ENCODE measurements at regions of chrX and their contacts with region 1.

Region 1: DNA sequence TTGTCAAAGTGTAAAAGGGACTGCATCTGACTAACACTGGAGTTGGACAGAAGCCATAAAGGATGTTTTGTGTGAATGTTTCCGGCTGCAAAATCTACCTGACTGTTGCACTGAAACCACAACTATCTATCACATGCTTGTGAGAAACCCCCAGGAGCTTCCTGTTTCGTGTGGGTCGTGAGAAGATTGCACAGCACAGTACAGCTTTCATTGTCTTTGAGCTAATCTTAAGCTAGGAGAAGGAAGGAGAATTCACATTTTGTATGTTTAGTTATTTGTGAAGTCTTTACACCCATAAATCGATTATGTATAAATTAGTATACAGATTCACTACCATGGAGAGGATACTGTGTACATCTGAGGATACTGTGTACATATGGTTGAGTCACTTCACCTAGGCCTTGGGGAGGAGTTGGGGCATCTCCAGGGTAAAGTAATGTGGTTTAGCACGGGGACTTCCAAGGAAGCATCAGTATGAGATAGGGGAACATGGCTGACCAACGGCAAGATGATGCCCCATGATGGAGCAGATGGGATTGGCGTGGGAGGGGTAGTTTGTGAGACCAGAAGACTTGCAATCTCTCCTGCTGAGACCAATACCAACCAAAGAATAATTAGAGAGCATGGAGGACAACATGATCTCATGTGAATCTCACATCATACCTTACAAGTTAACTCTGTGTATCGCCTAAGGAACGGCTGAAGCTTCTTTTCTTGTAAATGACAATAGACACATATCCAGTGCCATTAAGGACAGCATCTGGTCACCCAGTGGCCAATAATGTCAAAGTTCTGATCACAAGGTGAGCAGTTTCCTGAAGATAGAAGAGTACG is 43.1 kb upstream of the FAM9C start:
- DNase-seq: peak; percentile 99
- ATAC-seq: peak; percentile 54
- H3K4me3 ChIP-seq: no peak overlapping the region; the same call in 1 of the 2 replicates
- H3K27ac ChIP-seq: peak overlapping the region; percentile 100
- H3K4me1 ChIP-seq: peaks cover 89% of the 10 kb centered on the region
- H3K27me3 ChIP-seq: no peaks in the 10 kb centered on the region
- CTCF ChIP-seq: no peak
- EP300 ChIP-seq: peak; percentile 71 to 90
- POLR2A ChIP-seq: 0 out of 2 replicates have a peak, but pooled peaks have one; percentile 45
- RAD21 ChIP-seq: 0 out of 2 replicates have a peak, but pooled peaks have one; percentile 15

Region 2: GRCh38 chrX:12843668-12844279 is 243.8 kb before region 1 on chrX:
- CTCF ChIA-PET with region 1: no interaction called
- POLR2A ChIA-PET with region 1: interaction called, 3 read pairs
- RAD21 ChIA-PET with region 1: interaction called, 4 read pairs
- SMC1A ChIA-PET with region 1: no interaction called
- in situ Hi-C with region 1: no loop called
- intact Hi-C with region 1: loop called (anchors 5 kb)
- DNase-seq: peak; percentile 85
- ATAC-seq: peak; percentile 92
- H3K4me3 ChIP-seq: peak overlapping the region; percentile 42; the same call in 1 of the 2 replicates
- H3K27ac ChIP-seq: peak overlapping the region; percentile 100
- H3K4me1 ChIP-seq: peaks cover 29% of the 10 kb centered on the region
- H3K27me3 ChIP-seq: no peaks in the 10 kb centered on the region
- CTCF ChIP-seq: no peak
- EP300 ChIP-seq: peak in 1 of 2 experiments; percentile 57; a peak in 1 of 4 replicates
- POLR2A ChIP-seq: no peak
- RAD21 ChIP-seq: no peak

Region 3: DNA sequence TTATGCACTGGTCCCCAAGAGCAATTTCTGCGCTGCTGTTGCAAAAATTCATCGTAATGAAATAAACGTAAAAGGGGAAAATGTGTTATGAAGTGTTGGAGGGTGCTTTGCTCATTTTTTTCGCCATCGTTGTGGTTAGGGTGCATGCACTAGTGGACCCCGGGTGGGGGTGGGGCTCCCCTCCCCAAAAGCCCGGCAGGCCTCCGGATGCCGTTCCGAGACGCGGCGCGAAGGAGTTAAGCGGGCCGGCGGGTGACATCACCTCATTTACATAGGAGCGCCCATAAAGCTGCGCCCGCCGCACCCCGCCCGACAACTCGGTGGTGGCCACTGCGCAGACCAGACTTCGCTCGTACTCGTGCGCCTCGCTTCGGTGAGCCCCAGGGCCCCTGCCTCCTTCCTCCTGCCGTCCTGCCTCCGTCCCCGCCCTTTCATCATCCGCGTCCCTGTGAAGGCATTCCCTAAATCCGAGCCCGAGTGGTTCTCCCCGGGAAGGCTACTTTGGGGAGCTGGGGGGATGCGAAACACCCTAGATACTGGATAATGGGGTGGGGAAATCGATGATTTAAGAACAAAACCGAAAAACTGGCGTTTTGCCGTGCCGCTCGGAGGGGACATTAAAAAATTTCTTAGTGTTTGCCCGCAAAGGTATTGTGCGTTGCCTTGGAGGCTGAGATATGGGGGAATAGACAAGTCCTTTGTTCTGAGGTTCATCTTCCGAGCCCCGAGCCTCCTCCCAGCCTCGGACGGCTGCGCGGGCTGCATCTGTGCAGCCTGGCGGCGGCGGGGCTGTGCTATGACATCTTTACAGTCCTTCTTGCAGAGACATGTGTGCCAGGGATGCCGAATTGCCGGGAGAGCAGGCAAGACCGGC is 112.5 kb before region 1 on chrX and contains the start of gene TMSB4X:
- CTCF ChIA-PET with region 1: interaction called, 13 read pairs
- POLR2A ChIA-PET with region 1: interaction called, 21 read pairs
- RAD21 ChIA-PET with region 1: interaction called, 562 read pairs
- SMC1A ChIA-PET with region 1: interaction called, 393 read pairs
- in situ Hi-C with region 1: no loop called
- intact Hi-C with region 1: loop called (anchors 1 kb)
- DNase-seq: no peak
- ATAC-seq: peak; percentile 35
- H3K4me3 ChIP-seq: peak within 1 kb of the TSS; percentile 81
- H3K27ac ChIP-seq: peak within 1 kb of the TSS; percentile 90
- H3K4me1 ChIP-seq: peaks cover 6% of the 10 kb centered on the region; the same call in 1 of the 2 replicates
- H3K27me3 ChIP-seq: no peaks in the 10 kb centered on the region
- CTCF ChIP-seq: no peak
- EP300 ChIP-seq: no peak
- POLR2A ChIP-seq: peak; percentile 97
- RAD21 ChIP-seq: no peak
- polyA plus RNA-seq, gene TMSB4X: 32,576 to 35,408 TPM

Region 4: DNA sequence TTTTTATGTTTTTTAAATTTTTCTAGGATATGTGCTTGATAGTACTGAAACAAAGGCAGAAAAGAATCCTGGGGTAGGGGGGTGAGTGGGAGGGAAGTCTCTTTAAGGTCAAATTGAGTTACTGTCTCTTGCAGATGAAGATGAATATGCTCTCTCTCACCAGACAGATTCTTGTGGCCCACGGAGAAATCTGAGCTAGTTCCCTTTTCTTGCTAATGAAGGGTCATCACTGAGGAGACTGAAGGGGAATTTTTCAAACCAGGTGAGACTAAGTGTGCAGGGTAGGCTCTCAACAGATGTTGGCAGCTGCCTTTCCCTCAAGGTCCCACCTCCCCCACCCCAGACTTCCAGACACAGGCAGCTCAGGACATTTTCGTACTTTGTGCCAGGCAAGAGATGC is 64.6 kb before region 1 on chrX:
- CTCF ChIA-PET with region 1: interaction called, 5 read pairs
- POLR2A ChIA-PET with region 1: interaction called, 11 read pairs
- RAD21 ChIA-PET with region 1: interaction called, 18 read pairs
- SMC1A ChIA-PET with region 1: interaction called, 84 read pairs
- in situ Hi-C with region 1: no loop called
- intact Hi-C with region 1: loop called (anchors 1 kb)
- DNase-seq: no peak
- ATAC-seq: peak; percentile 91
- H3K4me3 ChIP-seq: no peak overlapping the region
- H3K27ac ChIP-seq: peak overlapping the region; percentile 47
- H3K4me1 ChIP-seq: peaks cover 43% of the 10 kb centered on the region
- H3K27me3 ChIP-seq: no peaks in the 10 kb centered on the region
- CTCF ChIP-seq: no peak
- EP300 ChIP-seq: peak in 1 of 2 experiments; percentile 75; a peak in 2 of 4 replicates
- POLR2A ChIP-seq: no peak
- RAD21 ChIP-seq: no peak

Region 5: DNA sequence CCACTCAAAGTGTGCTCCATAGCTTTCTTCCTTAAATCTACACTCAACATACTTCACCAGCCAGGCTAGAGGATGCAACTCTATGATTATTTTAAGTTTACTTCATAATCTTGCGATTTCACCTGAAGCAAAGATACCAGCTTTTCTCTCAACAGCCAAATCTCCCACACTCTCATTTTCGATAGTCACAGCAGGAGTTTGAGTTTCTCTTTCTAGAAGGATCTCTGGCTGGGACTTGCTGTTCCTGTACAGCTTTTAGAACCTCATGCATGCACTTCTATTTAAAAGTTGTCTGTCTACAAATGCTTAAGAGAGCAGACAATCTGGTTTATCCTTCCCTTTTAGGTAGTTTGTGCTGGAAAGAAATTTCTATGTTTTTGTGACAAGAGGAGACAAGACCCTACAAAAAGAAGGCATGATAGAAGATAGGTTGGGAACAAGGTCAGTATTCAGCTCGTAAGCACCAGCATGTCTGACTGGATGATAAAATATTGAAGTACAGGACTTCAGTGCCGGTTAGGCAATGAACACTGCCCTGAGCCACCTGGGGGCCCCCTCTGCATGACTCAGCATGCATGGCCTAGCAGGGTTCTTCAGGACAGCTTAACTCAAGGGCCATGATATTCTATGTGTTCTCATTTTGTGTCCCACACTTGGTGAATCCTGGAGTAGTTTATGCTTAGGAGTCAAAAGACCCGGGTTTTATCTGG is 166.7 kb after region 1 on chrX:
- CTCF ChIA-PET with region 1: interaction called, 104 read pairs
- POLR2A ChIA-PET with region 1: interaction called, 49 read pairs
- RAD21 ChIA-PET with region 1: interaction called, 242 read pairs
- SMC1A ChIA-PET with region 1: interaction called, 153 read pairs
- in situ Hi-C with region 1: loop called (anchors 5 kb)
- intact Hi-C with region 1: loop called (anchors 1 kb)
- DNase-seq: peak; percentile 56
- ATAC-seq: peak; percentile 59
- H3K4me3 ChIP-seq: no peak overlapping the region; the same call in 1 of the 2 replicates
- H3K27ac ChIP-seq: peak overlapping the region; percentile 92
- H3K4me1 ChIP-seq: peaks cover 58% of the 10 kb centered on the region
- H3K27me3 ChIP-seq: no peaks in the 10 kb centered on the region
- CTCF ChIP-seq: peak; percentile 33 to 52 (median 41); a peak in 4 of 6 replicates
- EP300 ChIP-seq: no peak
- POLR2A ChIP-seq: no peak
- RAD21 ChIP-seq: peak; percentile 75

Region 6: GRCh38 chrX:13473442-13474163 is 386.1 kb after region 1 on chrX:
- CTCF ChIA-PET with region 1: interaction called, 6 read pairs
- POLR2A ChIA-PET with region 1: no interaction called
- RAD21 ChIA-PET with region 1: interaction called, 9 read pairs
- SMC1A ChIA-PET with region 1: interaction called, 17 read pairs
- in situ Hi-C with region 1: loop called (anchors 5 kb)
- intact Hi-C with region 1: no loop called
- DNase-seq: peak; percentile 52
- ATAC-seq: peak; percentile 92
- H3K4me3 ChIP-seq: peak overlapping the region; percentile 52; the same call in 1 of the 2 replicates
- H3K27ac ChIP-seq: peak overlapping the region; percentile 88
- H3K4me1 ChIP-seq: no peaks in the 10 kb centered on the region
- H3K27me3 ChIP-seq: no peaks in the 10 kb centered on the region
- CTCF ChIP-seq: no peak
- EP300 ChIP-seq: peak; percentile 51 to 81; a peak in 3 of 4 replicates
- POLR2A ChIP-seq: no peak
- RAD21 ChIP-seq: no peak

Region 7: GRCh38 chrX:13669246-13669737 is 581.8 kb after region 1 on chrX:
- CTCF ChIA-PET with region 1: no interaction called
- POLR2A ChIA-PET with region 1: no interaction called
- RAD21 ChIA-PET with region 1: interaction called, 5 read pairs
- SMC1A ChIA-PET with region 1: interaction called, 4 read pairs
- in situ Hi-C with region 1: no loop called
- intact Hi-C with region 1: loop called (anchors 5 kb)
- DNase-seq: peak; percentile 89
- ATAC-seq: peak; percentile 77
- H3K4me3 ChIP-seq: peak overlapping the region; percentile 44; the same call in 1 of the 2 replicates
- H3K27ac ChIP-seq: peak overlapping the region; percentile 92
- H3K4me1 ChIP-seq: peaks cover 37% of the 10 kb centered on the region
- H3K27me3 ChIP-seq: no peaks in the 10 kb centered on the region
- CTCF ChIP-seq: no peak
- EP300 ChIP-seq: peak; percentile 91 to 92
- POLR2A ChIP-seq: no peak
- RAD21 ChIP-seq: 0 out of 2 replicates have a peak, but pooled peaks have one; percentile 15

Region 8: DNA sequence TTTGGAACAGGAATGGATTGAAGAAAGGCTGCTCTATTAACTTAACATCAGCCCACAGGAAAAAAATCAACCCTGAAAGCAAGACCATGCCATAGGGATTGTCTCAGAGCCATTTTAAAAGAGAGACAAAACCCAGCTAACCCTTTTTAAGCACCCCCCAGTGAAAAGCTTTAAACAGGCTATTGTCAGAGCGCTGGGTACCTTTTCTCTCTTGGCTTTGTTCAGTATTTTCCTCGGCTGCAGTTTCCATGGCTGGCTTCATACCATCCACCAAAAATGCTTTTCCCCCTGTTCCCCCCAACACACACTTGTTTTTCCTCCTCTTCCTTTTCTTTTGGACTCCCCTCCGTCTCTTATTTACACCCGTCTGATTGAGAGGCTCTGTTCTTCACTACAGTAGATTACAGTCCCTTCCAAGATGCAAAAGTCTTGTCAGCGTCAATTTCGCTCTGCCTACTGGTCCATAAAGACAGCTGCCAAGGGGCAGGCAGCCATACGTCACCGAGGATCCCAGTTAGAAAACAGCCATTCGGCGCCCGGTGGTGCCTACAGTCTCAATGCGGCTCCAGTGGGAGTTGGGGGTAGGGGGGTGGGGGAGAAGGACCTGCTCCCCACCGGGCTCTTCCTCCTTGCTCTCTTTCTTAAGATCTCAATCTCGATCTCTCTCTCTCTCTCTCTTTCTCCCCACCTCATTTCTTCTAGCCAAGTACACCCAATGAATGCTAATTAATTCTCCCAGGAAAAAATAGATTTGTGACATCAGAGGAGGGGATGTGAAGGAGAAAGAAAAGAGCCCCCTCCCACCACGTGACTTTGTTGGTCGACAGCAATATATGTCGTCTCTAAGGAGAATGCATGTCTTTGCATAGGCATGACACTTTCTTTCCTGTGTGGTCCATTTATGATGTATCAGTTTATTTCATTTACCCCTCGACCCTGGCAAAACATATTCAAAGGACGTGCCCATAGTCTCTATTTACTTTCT is 729.4 kb after region 1 on chrX and contains the start of gene GPM6B:
- CTCF ChIA-PET with region 1: no interaction called
- POLR2A ChIA-PET with region 1: no interaction called
- RAD21 ChIA-PET with region 1: no interaction called
- SMC1A ChIA-PET with region 1: no interaction called
- in situ Hi-C with region 1: no loop called
- intact Hi-C with region 1: no loop called
- DNase-seq: no peak
- ATAC-seq: no peak
- H3K4me3 ChIP-seq: no peak within 1 kb of the TSS
- H3K27ac ChIP-seq: no peak within 1 kb of the TSS
- H3K4me1 ChIP-seq: no peaks in the 10 kb centered on the region
- H3K27me3 ChIP-seq: no peaks in the 10 kb centered on the region; a peak in 1 of 4 replicates
- CTCF ChIP-seq: no peak
- EP300 ChIP-seq: no peak
- POLR2A ChIP-seq: no peak
- RAD21 ChIP-seq: no peak
- polyA plus RNA-seq, gene GPM6B: 0.26 to 0.53 TPM

Measured in GM12878 (cell line).